SK-N-SH (cell line): ENCODE measurements at regions of chr7 and their contacts with region 1.

Region 1: GRCh38 chr7:1086588-1087464 is 1.1 kb upstream of the GPER1 start:
- DNase-seq: peak; percentile 94
- H3K4me3 ChIP-seq: peak overlapping the region; percentile 33 to 62
- H3K27ac ChIP-seq: peak overlapping the region in 1 of 2 experiments; percentile 31; a peak in 1 of 4 replicates
- H3K4me1 ChIP-seq: peaks cover 25 to 44% of the 10 kb centered on the region in 2 experiments
- H3K27me3 ChIP-seq: no peaks in the 10 kb centered on the region
- CTCF ChIP-seq: peak; percentile 99
- EP300 ChIP-seq: no peak
- RAD21 ChIP-seq: peak; percentile 60

Region 2: GRCh38 chr7:514651-515598 is 571.9 kb before region 1 on chr7:
- CTCF ChIA-PET with region 1: no interaction called
- POLR2A ChIA-PET with region 1: no interaction called
- DNase-seq: no peak
- H3K4me3 ChIP-seq: no peak overlapping the region
- H3K27ac ChIP-seq: peak overlapping the region in 1 of 2 experiments; percentile 79; a peak in 2 of 4 replicates
- H3K4me1 ChIP-seq: peaks cover 0 to 29% of the 10 kb centered on the region in 2 experiments; a peak in 3 of 4 replicates
- H3K27me3 ChIP-seq: no peaks in the 10 kb centered on the region
- CTCF ChIP-seq: no peak
- EP300 ChIP-seq: no peak
- RAD21 ChIP-seq: no peak

Region 3: GRCh38 chr7:886626-887487 is 200.0 kb before region 1 on chr7:
- CTCF ChIA-PET with region 1: no interaction called
- POLR2A ChIA-PET with region 1: no interaction called
- DNase-seq: no peak
- H3K4me3 ChIP-seq: no peak overlapping the region
- H3K27ac ChIP-seq: no peak overlapping the region
- H3K4me1 ChIP-seq: no peaks in the 10 kb centered on the region; a peak in 1 of 4 replicates
- H3K27me3 ChIP-seq: no peaks in the 10 kb centered on the region
- CTCF ChIP-seq: no peak
- EP300 ChIP-seq: no peak
- RAD21 ChIP-seq: no peak

Region 4: DNA sequence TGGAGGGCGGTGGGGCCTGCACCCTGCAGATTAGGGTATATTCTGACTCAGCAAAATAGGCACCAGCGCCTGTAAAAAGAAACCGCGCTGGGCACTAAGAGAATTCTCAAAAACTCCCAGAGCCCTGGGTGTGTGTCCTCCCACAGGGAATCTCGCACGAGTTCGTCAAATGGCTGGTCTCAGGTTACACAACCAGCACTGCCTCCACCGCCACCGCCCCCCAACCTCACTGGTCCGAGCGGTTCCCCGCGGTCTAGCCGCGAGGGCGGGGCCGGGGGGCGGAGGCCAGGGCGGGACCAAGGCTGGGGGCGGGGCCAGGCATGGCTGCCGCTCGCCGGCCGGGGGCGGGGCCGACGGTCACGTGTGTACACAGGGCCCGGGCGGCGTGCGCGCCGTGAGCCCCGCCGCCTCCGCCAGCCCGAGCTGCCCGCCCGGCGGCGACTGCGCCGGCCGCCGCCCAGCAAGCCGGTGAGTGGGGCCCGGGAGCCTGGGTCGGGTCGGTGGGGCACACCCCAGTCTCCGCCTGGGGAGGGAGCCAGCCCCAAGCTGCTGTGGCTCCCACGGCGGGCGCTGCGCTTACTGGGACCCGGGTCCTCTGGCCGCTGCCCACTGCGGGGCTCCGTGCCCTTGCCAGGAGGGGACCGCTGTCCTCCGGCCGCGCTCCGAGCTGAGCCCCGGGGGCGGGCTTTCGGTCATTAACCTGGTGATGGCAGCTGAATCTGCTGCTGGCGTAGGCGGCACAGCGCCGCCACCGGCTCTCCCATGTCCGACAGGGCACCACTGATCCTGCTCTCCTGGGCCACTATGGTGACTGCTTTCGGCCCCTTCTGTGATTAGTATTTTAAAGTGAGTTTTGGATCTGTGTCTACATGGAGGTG is 42.4 kb before region 1 on chr7 and contains the start of gene GPR146:
- CTCF ChIA-PET with region 1: interaction called, 37 read pairs
- POLR2A ChIA-PET with region 1: no interaction called
- DNase-seq: peak; percentile 100
- H3K4me3 ChIP-seq: peak within 1 kb of the TSS; percentile 78 to 79
- H3K27ac ChIP-seq: peak within 1 kb of the TSS; percentile 66 to 81
- H3K4me1 ChIP-seq: peaks cover 16 to 74% of the 10 kb centered on the region in 2 experiments
- H3K27me3 ChIP-seq: no peaks in the 10 kb centered on the region
- CTCF ChIP-seq: peak; percentile 84
- EP300 ChIP-seq: no peak
- RAD21 ChIP-seq: peak; percentile 48
- polyA plus RNA-seq, gene GPR146: 1.4 and 2.0 TPM in 2 replicates

Region 5: DNA sequence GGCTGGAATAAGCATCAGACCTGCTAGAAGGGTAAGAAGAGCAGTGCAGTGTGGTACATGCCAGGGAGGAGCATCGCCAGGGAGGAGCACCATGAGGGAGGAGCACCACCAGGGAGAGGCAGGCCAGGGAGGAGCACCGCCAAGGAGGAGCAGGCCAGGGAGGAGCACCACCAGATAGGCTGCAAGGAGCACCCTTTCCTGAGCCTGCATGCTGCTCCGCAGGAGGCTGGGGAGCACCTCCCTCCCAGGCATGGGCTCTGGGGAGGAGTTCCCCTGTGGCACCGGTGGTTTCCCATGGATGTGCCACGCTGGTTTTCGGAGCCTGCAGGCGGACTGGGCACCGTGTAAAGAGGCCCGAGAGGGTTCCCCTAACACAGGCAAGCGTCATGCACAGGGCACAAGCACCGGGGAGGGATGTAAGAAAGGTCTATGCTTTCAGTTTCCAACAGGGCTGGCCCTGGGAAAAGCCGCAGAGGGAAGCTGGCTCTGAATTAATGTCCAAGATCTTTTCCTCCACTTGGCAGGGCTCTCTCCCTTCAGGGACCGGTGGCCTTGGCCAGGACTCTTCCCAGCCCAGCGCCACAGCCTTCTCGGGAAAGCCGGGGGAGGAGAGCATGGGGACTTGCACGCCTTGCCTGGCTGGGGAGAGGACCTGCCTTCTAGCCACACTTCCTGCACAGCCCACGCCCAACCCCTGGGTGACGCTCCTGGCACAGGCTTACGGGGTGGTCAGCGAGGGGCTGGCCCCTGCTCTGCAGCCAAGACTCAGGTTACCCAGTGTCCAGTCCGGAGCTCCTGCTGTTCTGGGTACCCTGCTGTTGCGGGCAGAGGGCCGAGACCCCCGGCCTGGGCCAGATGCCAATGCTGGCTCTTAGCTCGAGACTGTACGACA is 10.4 kb before region 1 on chr7:
- CTCF ChIA-PET with region 1: interaction called, 18 read pairs
- POLR2A ChIA-PET with region 1: no interaction called
- DNase-seq: no peak
- H3K4me3 ChIP-seq: no peak overlapping the region
- H3K27ac ChIP-seq: no peak overlapping the region
- H3K4me1 ChIP-seq: peaks cover 0 to 12% of the 10 kb centered on the region in 2 experiments; a peak in 1 of 4 replicates
- H3K27me3 ChIP-seq: no peaks in the 10 kb centered on the region
- CTCF ChIP-seq: no peak
- EP300 ChIP-seq: no peak
- RAD21 ChIP-seq: no peak

Region 6: DNA sequence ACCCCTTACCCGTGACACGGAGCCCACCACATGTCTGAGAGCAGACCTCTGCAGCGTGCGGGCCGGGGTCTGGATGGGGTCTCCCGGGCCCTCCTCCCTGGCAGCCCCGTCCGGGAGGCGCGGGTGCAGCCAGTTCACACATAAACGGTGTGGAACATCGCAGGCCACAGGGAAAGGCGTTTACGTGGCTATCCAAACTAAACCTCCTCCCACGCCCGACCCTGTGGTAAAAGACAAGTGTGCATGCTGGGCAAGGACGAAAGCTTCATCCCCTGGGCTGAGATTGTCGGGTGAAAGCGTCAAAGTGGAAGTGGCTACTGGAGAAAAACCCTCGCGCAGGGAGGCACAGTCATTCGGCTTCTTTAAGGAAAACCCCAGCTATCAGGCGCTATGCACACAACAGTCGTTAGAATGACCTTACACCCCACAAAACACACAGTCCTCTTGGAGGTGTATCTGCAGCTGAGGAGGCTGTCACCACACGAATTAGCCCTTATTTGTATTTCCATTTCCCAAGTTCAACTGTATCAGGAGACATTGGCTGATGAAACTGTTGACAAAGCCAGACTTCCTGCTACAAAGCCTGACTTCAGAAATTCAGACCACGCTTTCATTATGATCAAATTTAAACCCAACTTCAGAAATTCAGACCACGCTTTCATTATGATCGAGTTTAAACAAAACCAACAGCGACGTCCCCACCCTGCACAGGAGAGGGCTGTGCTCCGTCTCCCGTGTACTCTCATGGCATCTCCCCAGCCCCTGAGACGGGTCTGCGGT is 16.4 kb after region 1 on chr7:
- CTCF ChIA-PET with region 1: interaction called, 79 read pairs
- POLR2A ChIA-PET with region 1: no interaction called
- DNase-seq: no peak
- H3K4me3 ChIP-seq: no peak overlapping the region
- H3K27ac ChIP-seq: no peak overlapping the region
- H3K4me1 ChIP-seq: peaks cover 6 to 22% of the 10 kb centered on the region in 2 experiments; a peak in 2 of 4 replicates
- H3K27me3 ChIP-seq: no peaks in the 10 kb centered on the region
- CTCF ChIP-seq: no peak
- EP300 ChIP-seq: no peak
- RAD21 ChIP-seq: no peak

Region 7: GRCh38 chr7:1123715-1124114 is 36.9 kb after region 1 on chr7:
- CTCF ChIA-PET with region 1: interaction called, 34 read pairs
- POLR2A ChIA-PET with region 1: no interaction called
- DNase-seq: peak; percentile 79
- H3K4me3 ChIP-seq: no peak overlapping the region
- H3K27ac ChIP-seq: no peak overlapping the region
- H3K4me1 ChIP-seq: 0 out of 4 replicates have a peak, but pooled peaks cover 0 to 8% of the 10 kb centered on the region in 2 experiments
- H3K27me3 ChIP-seq: no peaks in the 10 kb centered on the region
- CTCF ChIP-seq: peak; percentile 49
- EP300 ChIP-seq: no peak
- RAD21 ChIP-seq: peak; percentile 61

Region 8: DNA sequence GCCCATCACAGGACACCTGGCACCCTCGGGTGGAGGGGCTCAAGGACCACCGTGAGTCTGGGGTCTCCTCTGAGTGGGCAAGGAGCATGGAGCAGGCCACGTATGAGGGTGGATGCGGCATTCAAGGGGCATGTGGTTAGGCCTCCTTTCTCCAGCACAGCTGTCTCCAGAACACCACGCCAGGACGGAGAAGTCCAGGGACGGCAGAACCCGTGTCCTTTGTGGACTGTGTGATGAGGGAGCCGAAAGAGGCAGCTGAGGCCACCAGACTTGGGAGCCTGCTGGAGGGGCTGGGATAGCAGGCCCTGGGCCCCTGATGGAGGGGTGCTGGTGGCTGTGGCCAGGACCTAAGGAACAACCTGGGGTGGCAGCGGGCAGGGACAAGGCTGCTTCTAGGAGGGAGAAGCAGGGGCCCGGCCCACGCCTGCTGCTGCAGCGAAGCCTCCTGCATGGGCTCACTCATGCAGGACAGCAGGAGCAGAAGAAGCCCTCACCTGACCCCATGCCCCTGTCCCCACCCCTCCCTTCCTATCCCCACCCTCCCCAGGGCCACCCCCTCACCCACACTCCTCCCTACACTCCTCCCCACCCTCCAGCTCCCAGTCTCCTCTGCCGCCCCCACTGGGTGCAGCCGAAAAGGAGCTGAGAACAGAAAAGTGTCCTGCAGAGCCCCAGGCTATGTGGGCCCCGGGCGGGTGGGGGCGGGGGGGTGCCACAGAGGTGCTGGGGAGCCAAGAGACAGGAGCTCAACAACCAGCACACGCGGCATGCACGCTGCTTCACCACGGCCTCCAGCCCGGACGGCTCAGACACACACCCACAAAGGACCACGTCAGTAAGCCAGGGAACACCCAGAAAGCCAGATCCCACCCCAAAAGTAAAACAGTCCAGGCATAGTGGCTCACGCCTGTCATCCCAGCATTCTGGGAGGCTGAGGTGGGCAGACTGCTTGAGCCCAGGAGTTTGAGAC is 43.5 kb after region 1 on chr7:
- CTCF ChIA-PET with region 1: interaction called, 34 read pairs
- POLR2A ChIA-PET with region 1: no interaction called
- DNase-seq: peak; percentile 14
- H3K4me3 ChIP-seq: no peak overlapping the region
- H3K27ac ChIP-seq: no peak overlapping the region
- H3K4me1 ChIP-seq: no peaks in the 10 kb centered on the region
- H3K27me3 ChIP-seq: no peaks in the 10 kb centered on the region
- CTCF ChIP-seq: no peak
- EP300 ChIP-seq: no peak
- RAD21 ChIP-seq: no peak

Region 9: GRCh38 chr7:1137510-1138167 is 50.8 kb after region 1 on chr7:
- CTCF ChIA-PET with region 1: interaction called, 59 read pairs
- POLR2A ChIA-PET with region 1: no interaction called
- DNase-seq: no peak
- H3K4me3 ChIP-seq: peak overlapping the region; percentile 68 to 90
- H3K27ac ChIP-seq: peak overlapping the region; percentile 1 to 70; a peak in 2 of 4 replicates
- H3K4me1 ChIP-seq: peaks cover 4 to 19% of the 10 kb centered on the region in 2 experiments; a peak in 2 of 4 replicates
- H3K27me3 ChIP-seq: no peaks in the 10 kb centered on the region
- CTCF ChIP-seq: no peak
- EP300 ChIP-seq: no peak
- RAD21 ChIP-seq: no peak

Region 10: GRCh38 chr7:1268738-1269313 is 182.0 kb after region 1 on chr7:
- CTCF ChIA-PET with region 1: no interaction called
- POLR2A ChIA-PET with region 1: no interaction called
- DNase-seq: no peak
- H3K4me3 ChIP-seq: no peak overlapping the region
- H3K27ac ChIP-seq: no peak overlapping the region
- H3K4me1 ChIP-seq: no peaks in the 10 kb centered on the region
- H3K27me3 ChIP-seq: peaks cover 75% of the 10 kb centered on the region
- CTCF ChIP-seq: no peak
- EP300 ChIP-seq: no peak
- RAD21 ChIP-seq: no peak